ENCODE measurements at regions of chr17 and their contacts with region 1.

Region 1: GRCh38 chr17:20226814-20227482 is 217.8 kb downstream of the SPECC1 start:
- DNase-seq: peak; percentile 84 to 97 (median 92)

Region 2: DNA sequence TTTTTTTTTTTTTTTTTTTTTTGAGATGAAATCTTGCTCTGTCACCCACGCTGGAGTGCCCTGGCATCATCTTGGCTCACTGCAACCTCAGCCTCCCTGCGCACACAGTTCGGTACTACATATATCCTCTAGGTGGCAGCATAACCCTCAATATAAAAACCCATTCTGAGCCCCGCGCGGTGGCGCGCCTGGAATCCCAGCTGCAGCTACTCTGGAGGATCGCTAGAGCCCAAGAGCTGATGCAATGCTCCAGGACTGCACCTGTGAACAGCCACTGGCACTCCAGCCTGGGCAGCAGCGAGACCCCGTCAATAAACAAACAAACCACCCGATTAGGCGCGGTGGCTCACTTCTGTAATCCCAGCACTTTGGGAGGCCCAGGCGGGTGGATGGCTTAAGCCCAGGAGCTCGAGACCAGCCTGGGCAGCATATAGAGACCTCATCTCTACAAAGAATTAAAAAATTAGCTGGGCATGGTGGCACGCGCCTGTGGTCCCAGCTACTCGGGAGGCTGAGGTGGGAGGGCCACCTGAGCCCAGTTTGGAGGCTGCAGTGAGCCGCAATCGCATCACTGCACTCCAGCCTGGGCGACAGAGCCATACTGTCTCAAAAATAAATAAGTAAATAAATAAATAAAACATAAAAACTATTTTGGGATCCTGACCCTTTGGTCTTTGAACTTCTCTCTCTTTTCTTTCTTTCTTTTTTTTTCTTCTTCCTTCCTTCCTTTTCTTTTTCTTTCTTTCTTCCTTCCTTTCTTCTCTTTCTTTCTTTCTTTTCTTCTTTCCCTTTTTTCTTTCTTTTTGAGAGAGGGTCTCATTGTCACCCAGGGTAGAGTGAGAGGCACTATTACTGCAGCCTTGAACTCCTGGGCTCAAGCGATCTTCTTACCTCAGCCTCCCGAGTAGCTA is 233.9 kb before region 1 on chr17:
- intact Hi-C with region 1: loop called (anchors 10 kb)
- DNase-seq: peak; percentile 85 to 96 (median 91)

Region 3: GRCh38 chr17:20315821-20316220 is 88.9 kb after region 1 on chr17:
- intact Hi-C with region 1: loop called (anchors 5 kb)
- DNase-seq: no peak

Measured in head of caudate nucleus (tissue), 42 donors.